ENCODE measurements at regions of chr14 and their contacts with region 1.

Region 1: GRCh38 chr14:20855652-20856291 is 35.4 kb upstream of the RNASE3 start:
- DNase-seq: peak; percentile 66
- ATAC-seq: peak; percentile 90
- H3K4me3 Mint-ChIP-seq: no peak overlapping the region
- H3K27ac Mint-ChIP-seq: no peak overlapping the region
- H3K4me1 Mint-ChIP-seq: peaks cover 12% of the 10 kb centered on the region
- H3K27me3 Mint-ChIP-seq: peaks cover 2% of the 10 kb centered on the region; the same call in 1 of the 2 replicates
- CTCF ChIP-seq: no peak

Region 2: DNA sequence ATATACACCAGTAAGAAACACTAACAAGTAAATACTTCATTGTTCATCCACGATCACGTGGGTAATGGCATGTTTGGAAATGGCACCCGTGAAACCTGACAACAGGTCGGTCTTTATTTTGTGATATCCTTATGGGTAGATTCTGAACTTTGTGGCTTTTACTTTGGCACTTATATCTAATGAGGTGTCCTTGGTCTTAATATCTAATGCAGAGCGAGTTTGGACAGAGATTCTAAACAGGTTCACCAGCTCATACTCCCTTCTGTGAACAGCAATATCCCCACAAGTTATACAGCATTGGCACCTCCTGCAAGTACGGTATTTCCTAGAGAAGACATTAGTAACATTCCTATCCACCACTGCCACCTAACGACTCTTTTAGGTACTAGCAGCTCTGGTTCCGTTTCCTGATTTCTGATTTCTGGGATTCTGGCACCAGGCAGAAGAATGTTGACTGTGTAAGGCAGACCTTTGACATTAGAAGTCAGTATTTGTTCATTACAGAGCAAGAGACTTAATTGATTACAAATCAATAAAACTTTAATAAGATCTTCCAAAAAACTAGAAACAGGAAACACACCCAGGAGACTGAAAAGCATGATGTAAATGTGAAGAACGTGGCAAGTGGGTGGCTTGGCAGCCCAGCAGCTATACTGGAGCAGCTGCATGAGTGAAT is 164.8 kb before region 1 on chr14:
- CTCF ChIA-PET with region 1: interaction called, 29 read pairs
- POLR2A ChIA-PET with region 1: no interaction called
- DNase-seq: peak; percentile 41
- ATAC-seq: peak; percentile 92
- H3K4me3 Mint-ChIP-seq: no peak overlapping the region
- H3K27ac Mint-ChIP-seq: no peak overlapping the region
- H3K4me1 Mint-ChIP-seq: peaks cover 5% of the 10 kb centered on the region; the same call in 1 of the 2 replicates
- H3K27me3 Mint-ChIP-seq: peaks cover 4% of the 10 kb centered on the region
- CTCF ChIP-seq: peak; percentile 58; the same call in 1 of the 2 replicates

Region 3: DNA sequence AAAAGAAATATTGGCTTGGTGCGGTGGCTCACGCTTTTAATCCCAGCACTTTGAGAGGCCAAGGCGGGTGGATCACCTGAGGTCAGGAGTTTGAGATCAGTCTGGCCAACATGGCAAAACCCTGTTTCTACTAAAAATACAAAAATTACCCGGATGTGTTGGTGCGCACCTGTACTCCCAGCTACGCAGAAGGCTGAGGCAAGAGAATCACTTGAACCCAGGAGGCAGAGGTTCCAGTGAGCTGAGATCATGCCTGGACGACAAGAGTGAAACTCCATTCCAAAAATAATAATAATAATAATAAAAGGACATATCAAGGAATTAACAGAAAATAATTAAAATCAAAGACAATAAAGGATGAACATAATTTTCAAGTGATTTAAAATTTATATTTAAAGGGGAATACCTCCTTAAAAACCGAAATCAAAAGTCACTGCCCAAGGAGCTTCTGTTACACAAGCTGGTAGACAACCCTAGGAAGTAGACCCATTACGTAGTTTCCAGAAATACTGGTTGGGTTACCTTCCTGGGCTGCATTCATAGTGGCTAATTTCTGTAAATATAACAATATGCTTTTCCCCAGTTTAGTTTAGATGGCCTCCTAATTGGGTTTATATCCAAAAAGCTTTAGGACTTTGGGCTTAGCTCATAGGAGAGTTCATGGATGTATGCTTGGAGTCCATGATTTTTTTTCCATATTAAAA is 112.4 kb before region 1 on chr14:
- CTCF ChIA-PET with region 1: interaction called, 11 read pairs
- POLR2A ChIA-PET with region 1: no interaction called
- DNase-seq: no peak
- ATAC-seq: no peak
- H3K4me3 Mint-ChIP-seq: no peak overlapping the region
- H3K27ac Mint-ChIP-seq: no peak overlapping the region
- H3K4me1 Mint-ChIP-seq: peaks cover 7% of the 10 kb centered on the region
- H3K27me3 Mint-ChIP-seq: peaks cover 2% of the 10 kb centered on the region; the same call in 1 of the 2 replicates
- CTCF ChIP-seq: no peak

Region 4: DNA sequence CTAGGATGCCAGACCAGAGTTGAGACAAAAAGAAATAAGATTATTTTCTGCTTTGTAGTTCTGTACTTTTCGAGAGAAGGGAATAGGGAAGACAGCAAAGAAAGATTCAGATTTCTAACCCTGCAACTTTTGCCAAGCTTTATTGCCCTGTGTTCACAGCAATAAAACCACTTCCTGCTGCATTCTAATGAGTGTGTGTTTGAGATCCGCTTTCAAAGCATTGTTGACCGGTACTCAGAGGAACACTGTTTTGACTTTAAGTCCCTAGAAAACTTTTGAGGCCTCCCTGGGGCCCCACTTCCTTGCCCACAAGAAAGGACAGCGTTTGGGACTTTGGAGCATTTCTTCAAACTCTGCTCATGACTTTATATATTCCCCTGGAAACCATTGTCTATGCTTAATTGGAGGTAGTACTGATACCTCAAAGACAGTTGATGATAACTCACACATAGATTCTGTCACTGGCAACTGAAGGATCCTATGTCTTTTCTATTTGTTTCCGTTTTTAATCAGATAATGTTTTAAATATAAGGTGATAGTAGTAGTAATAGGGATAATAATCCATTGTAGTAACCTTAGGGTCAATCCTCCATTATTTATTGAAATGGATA is 73.4 kb before region 1 on chr14:
- CTCF ChIA-PET with region 1: interaction called, 12 read pairs
- POLR2A ChIA-PET with region 1: no interaction called
- DNase-seq: no peak
- ATAC-seq: no peak
- H3K4me3 Mint-ChIP-seq: no peak overlapping the region
- H3K27ac Mint-ChIP-seq: peak overlapping the region; percentile 54
- H3K4me1 Mint-ChIP-seq: peaks cover 56% of the 10 kb centered on the region
- H3K27me3 Mint-ChIP-seq: no peaks in the 10 kb centered on the region; the same call in 1 of the 2 replicates
- CTCF ChIP-seq: no peak

Region 5: GRCh38 chr14:20836668-20837338 is 19.0 kb before region 1 on chr14:
- CTCF ChIA-PET with region 1: interaction called, 18 read pairs
- POLR2A ChIA-PET with region 1: no interaction called
- DNase-seq: peak; percentile 51
- ATAC-seq: peak; percentile 80
- H3K4me3 Mint-ChIP-seq: no peak overlapping the region
- H3K27ac Mint-ChIP-seq: peak overlapping the region; percentile 65; the same call in 1 of the 2 replicates
- H3K4me1 Mint-ChIP-seq: peaks cover 9% of the 10 kb centered on the region
- H3K27me3 Mint-ChIP-seq: no peaks in the 10 kb centered on the region
- CTCF ChIP-seq: no peak

Region 6: GRCh38 chr14:20934148-20934762 is 78.5 kb after region 1 on chr14:
- CTCF ChIA-PET with region 1: interaction called, 12 read pairs
- POLR2A ChIA-PET with region 1: no interaction called
- DNase-seq: peak; percentile 90
- ATAC-seq: peak; percentile 98
- H3K4me3 Mint-ChIP-seq: peak overlapping the region; percentile 54
- H3K27ac Mint-ChIP-seq: no peak overlapping the region
- H3K4me1 Mint-ChIP-seq: peaks cover 10% of the 10 kb centered on the region
- H3K27me3 Mint-ChIP-seq: peaks cover 16% of the 10 kb centered on the region
- CTCF ChIP-seq: peak; percentile 89

Measured in WTC11 (cell line).